Endothelial cell of umbilical vein (primary cell): ENCODE measurements at regions of chrX and their contacts with region 1.

Region 1: GRCh38 chrX:70433848-70434351 is 10.7 kb upstream of the DLG3 start:
- DNase-seq: peak; percentile 49
- H3K4me3 ChIP-seq: peak overlapping the region; percentile 39 to 86 (median 52)
- H3K27ac ChIP-seq: peak overlapping the region; percentile 67
- H3K4me1 ChIP-seq: peaks cover 9% of the 10 kb centered on the region
- H3K27me3 ChIP-seq: no peaks in the 10 kb centered on the region
- CTCF ChIP-seq: peak; percentile 60 to 81
- POLR2A ChIP-seq: no peak

Region 2: DNA sequence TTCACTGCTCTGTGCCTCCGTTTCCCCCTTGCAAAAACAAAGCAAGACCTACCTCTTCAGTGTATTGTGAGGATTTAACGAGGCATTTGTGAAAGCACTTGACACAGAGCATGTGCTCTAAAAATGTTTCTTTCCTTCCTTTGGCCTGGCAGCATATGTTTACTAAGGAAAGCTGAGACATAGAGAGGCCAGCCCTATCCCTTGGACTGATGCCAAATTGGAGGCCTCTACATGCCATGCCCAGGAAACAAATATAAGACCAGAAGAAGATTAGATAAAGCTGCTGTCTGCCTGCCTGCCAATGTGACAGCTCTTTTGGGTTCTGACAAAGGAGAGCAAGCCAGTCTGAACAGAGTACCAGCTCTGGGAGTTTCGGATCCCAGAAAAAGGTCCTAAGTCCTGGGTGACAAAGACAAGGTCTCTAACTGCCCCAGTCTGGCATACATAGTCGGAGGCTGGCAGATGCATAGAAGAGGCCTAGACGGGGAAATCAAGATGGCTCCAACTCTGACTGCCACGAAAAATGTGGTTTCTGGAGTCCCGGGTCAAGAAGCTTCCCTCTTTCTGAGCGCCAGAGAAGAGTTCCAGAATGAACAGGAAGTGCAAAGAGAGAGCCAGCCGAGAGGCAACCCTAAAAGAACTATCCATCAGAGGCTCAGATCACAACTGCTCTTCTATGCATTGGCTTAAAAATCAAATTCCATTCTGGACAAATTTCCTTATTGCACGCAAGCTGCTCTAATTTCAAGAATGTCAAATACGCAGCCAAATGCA is 345.9 kb before region 1 on chrX:
- CTCF ChIA-PET with region 1: no interaction called
- POLR2A ChIA-PET with region 1: no interaction called
- dilution Hi-C with region 1: no loop called
- intact Hi-C with region 1: no loop called
- DNase-seq: peak; percentile 75
- H3K4me3 ChIP-seq: no peak overlapping the region
- H3K27ac ChIP-seq: no peak overlapping the region
- H3K4me1 ChIP-seq: peaks cover 29% of the 10 kb centered on the region
- H3K27me3 ChIP-seq: no peaks in the 10 kb centered on the region
- CTCF ChIP-seq: no peak
- POLR2A ChIP-seq: no peak

Region 3: DNA sequence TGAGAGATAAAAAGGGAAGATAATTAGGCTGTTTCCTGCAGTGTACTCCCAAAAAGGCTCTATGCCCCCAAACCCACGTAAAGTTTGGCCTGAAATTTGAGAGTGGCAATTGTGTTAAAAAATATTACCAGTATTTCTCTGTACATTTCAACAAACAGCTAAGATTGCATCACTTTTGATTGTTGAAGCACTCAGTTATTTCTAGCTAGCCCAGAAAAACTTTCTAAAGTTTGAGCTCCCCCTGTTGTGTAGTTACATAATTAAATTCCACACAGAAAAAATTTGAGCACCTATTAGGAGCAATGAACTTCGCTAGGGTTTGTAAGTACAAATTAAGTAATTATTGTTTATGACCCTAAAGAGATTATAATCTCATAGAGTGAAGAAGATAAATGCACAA is 120.2 kb after region 1 on chrX:
- CTCF ChIA-PET with region 1: interaction called, 4 read pairs
- POLR2A ChIA-PET with region 1: no interaction called
- dilution Hi-C with region 1: no loop called
- intact Hi-C with region 1: loop called (anchors 5 kb)
- DNase-seq: peak; percentile 9
- H3K4me3 ChIP-seq: no peak overlapping the region
- H3K27ac ChIP-seq: no peak overlapping the region
- H3K4me1 ChIP-seq: no peaks in the 10 kb centered on the region
- H3K27me3 ChIP-seq: no peaks in the 10 kb centered on the region
- CTCF ChIP-seq: no peak
- POLR2A ChIP-seq: no peak

Region 4: GRCh38 chrX:70664726-70665125 is 230.8 kb after region 1 on chrX:
- CTCF ChIA-PET with region 1: interaction called, 14 read pairs
- POLR2A ChIA-PET with region 1: no interaction called
- dilution Hi-C with region 1: no loop called
- intact Hi-C with region 1: no loop called
- DNase-seq: peak; percentile 13
- H3K4me3 ChIP-seq: no peak overlapping the region
- H3K27ac ChIP-seq: no peak overlapping the region
- H3K4me1 ChIP-seq: no peaks in the 10 kb centered on the region
- H3K27me3 ChIP-seq: no peaks in the 10 kb centered on the region
- CTCF ChIP-seq: peak in 1 of 2 donors; percentile 13
- POLR2A ChIP-seq: no peak